Astrocyte of the cerebellum (primary cell): ENCODE measurements at regions of chr5 and their contacts with region 1.

Region 1: GRCh38 chr5:168382421-168382820 is 91.0 kb downstream of the WWC1 start:
- DNase-seq: no peak
- H3K4me3 ChIP-seq: no peak overlapping the region
- CTCF ChIP-seq: no peak

Region 2: DNA sequence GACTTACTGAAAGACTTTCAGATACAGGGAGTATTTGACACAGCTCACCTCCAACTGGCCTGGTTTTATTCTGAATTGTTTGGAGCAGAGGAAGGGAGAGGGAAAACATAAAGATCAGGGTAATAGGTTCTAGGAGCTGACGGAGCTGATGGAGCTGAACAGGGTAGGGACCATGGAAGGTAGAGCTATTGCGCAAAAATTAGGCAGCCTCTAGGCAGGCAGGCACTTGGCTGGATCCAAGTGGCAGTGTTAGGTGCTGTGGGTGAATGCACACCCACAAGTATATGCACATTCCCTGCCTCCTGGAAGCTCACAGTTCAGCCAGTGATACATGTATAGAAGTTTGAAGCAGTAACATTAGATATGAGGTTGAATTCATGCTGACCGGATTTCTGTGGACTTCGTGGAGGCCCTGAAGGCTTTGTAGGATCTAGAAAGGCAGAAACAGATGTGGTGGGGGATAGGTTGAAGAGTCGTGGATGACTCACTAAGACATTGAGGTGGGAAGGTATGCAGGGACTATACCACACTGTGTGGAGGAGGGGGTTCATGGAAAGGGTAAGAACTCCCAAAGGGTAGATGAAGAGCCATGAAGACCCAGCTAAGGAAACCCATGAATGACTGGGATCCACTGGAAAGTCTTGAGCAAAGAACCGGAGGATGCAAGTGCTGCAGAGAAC is 40.1 kb before region 1 on chr5:
- in situ Hi-C with region 1: loop called (anchors 5 kb)
- DNase-seq: no peak
- H3K4me3 ChIP-seq: no peak overlapping the region
- CTCF ChIP-seq: no peak

Region 3: GRCh38 chr5:168679515-168679920 is 297.1 kb after region 1 on chr5:
- in situ Hi-C with region 1: no loop called
- DNase-seq: peak; percentile 55
- H3K4me3 ChIP-seq: no peak overlapping the region
- CTCF ChIP-seq: peak; percentile 95